Activated CD4-positive, alpha-beta T cell treated with anti-CD3 and anti-CD28 coated beads, Interleukin-2, amount 10 ng/mL, durations not matched to agents 7 days and 5 days (primary cell): ENCODE measurements at regions of chr1 and their contacts with region 1.

Region 1: GRCh38 chr1:198691063-198691462 is 52.2 kb downstream of the PTPRC start:
- DNase-seq: no peak
- H3K4me3 Mint-ChIP-seq: no peak overlapping the region
- H3K27ac Mint-ChIP-seq: no peak overlapping the region
- H3K4me1 Mint-ChIP-seq: peaks cover 76% of the 10 kb centered on the region
- H3K27me3 Mint-ChIP-seq: no peaks in the 10 kb centered on the region

Region 2: DNA sequence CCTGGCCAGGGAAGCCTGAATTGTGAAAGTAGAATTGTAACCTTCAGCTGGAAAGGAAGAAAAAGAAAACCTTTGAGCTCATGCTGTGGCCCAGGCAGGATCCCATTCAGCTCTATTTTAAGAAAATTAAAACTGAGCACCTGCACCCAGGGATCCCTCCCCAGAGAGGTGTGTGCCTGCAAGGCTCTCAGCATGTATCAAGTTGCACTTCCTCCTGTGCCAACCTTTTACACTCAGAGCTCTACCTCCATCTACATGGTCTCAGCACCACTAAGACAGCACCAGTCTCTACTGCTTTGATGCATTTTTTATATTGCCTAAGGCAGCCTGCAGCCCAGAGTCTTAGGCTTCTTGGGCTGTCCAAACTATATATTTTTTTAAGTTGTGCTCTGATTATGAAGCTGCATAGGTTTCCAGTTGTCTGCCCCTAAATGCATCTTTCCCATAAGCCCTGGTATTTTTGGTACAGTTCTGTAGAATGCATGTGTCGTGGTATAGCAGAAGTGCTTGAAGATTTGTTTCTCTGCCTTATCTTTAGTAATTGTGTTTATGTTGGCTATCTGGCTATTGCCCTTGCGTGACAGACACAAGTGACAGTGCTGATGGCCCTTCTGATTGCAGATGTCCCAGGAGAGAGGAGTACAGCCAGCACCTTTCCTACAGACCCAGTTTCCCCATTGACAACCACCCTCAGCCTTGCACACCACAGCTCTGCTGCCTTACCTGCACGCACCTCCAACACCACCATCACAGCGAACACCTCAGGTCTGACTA is 10.9 kb after region 1 on chr1:
- CTCF ChIA-PET with region 1: interaction called, 13 read pairs
- POLR2A ChIA-PET with region 1: no interaction called
- DNase-seq: no peak
- H3K4me3 Mint-ChIP-seq: no peak overlapping the region
- H3K27ac Mint-ChIP-seq: no peak overlapping the region
- H3K4me1 Mint-ChIP-seq: peaks cover 74% of the 10 kb centered on the region
- H3K27me3 Mint-ChIP-seq: no peaks in the 10 kb centered on the region